Mammary epithelial cell (primary cell): ENCODE measurements at regions of chr16 and their contacts with region 1.

Region 1: GRCh38 chr16:66483689-66484481 is 56.8 kb downstream of the BEAN1 start:
- DNase-seq: peak; percentile 51
- H3K4me3 ChIP-seq: no peak overlapping the region
- H3K27ac ChIP-seq: no peak overlapping the region
- H3K4me1 ChIP-seq: peaks cover 38% of the 10 kb centered on the region
- H3K27me3 ChIP-seq: no peaks in the 10 kb centered on the region
- CTCF ChIP-seq: peak; percentile 98 to 99

Region 2: GRCh38 chr16:66357153-66357928 is 126.5 kb before region 1 on chr16:
- CTCF ChIA-PET with region 1: no interaction called
- dilution Hi-C with region 1: no loop called
- in situ Hi-C with region 1: no loop called
- intact Hi-C with region 1: loop called (anchors 1 kb)
- DNase-seq: peak; percentile 74
- H3K4me3 ChIP-seq: no peak overlapping the region
- H3K27ac ChIP-seq: no peak overlapping the region
- H3K4me1 ChIP-seq: peaks cover 11% of the 10 kb centered on the region
- H3K27me3 ChIP-seq: peaks cover 3% of the 10 kb centered on the region
- CTCF ChIP-seq: peak; percentile 72 to 82

Region 3: DNA sequence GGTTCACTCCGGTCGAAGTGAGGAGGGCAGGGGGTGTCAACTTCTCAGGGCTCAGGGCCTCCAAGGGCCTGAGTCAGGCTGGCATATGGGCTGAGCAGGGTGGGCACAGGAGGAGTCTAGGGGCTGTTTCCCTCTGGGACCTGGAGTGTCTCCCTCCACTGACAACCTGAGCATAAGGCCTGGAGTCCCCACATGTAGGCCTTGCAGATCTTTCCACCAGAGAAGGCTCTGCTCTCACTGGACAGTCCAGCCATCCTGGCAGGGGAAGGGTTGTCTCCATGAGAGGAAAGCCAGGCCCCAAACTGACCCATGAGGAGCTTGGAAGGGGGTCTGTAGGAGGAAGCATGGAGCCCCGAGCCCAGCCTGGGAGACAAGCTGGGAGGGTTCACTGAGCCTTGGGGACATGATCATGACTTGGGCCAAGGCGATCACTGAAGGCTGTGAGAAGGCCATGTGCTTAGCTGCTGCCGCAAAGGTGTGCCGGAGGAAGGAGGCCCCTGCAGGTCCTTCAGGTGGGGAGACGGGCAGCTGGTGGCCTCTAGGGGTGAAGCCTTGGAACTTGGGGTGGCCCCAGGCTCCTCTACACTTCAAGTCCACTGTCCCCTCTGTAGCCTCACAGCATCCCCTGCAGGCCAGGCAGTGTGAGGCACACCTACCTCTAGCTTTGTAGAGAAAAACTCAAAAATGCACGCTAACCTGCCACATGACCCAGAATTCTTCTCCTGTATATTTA is 105.3 kb after region 1 on chr16:
- CTCF ChIA-PET with region 1: no interaction called
- dilution Hi-C with region 1: no loop called
- in situ Hi-C with region 1: no loop called
- intact Hi-C with region 1: loop called (anchors 2 kb)
- DNase-seq: peak; percentile 19
- H3K4me3 ChIP-seq: no peak overlapping the region
- H3K27ac ChIP-seq: no peak overlapping the region
- H3K4me1 ChIP-seq: no peaks in the 10 kb centered on the region
- H3K27me3 ChIP-seq: no peaks in the 10 kb centered on the region
- CTCF ChIP-seq: peak; percentile 72 to 75